Activated CD8-positive, alpha-beta T cell treated with anti-CD3 and anti-CD28 coated beads, Interleukin-2, amount 10 ng/mL, durations not matched to agents 7 days and 5 days (primary cell): ENCODE measurements at regions of chr2 and their contacts with region 1.

Region 1: GRCh38 chr2:237411683-237412423 is 2.1 kb downstream of the COL6A3 start:
- DNase-seq: no peak
- ATAC-seq: no peak
- H3K4me3 Mint-ChIP-seq: no peak overlapping the region
- H3K27ac Mint-ChIP-seq: no peak overlapping the region
- H3K4me1 Mint-ChIP-seq: no peaks in the 10 kb centered on the region
- H3K27me3 Mint-ChIP-seq: no peaks in the 10 kb centered on the region

Region 2: DNA sequence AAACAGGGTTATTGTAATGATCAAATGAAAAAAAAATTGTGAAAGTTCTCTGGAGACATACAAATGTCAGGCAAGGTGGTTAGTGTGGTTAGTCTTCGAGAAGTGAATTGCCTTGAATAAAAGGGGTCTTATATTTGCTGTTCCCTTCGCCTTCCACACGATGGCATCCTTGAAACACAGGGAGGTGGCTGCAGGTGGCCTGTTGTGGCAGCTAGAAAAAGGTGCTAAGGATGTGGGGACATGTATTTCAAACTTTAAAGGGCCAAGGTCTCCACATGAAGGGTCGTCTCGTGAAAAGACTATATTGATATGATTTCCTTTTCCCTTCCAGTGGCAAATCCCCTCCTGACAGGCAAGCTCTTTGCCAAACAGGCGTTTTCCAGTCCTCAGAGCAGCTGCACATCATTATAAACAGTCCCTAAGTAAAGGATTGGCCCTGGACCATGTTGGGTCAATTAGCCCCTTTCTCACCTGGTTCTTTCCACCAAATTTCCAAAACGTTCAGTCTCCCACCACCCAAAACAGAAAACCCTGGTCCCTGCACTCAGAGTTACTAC is 257.7 kb before region 1 on chr2:
- CTCF ChIA-PET with region 1: interaction called, 12 read pairs
- POLR2A ChIA-PET with region 1: no interaction called
- DNase-seq: peak; percentile 74
- ATAC-seq: peak; percentile 59
- H3K4me3 Mint-ChIP-seq: no peak overlapping the region
- H3K27ac Mint-ChIP-seq: no peak overlapping the region
- H3K4me1 Mint-ChIP-seq: peaks cover 35% of the 10 kb centered on the region
- H3K27me3 Mint-ChIP-seq: no peaks in the 10 kb centered on the region

Region 3: GRCh38 chr2:237383991-237384671 is 27.7 kb before region 1 on chr2:
- CTCF ChIA-PET with region 1: no interaction called
- POLR2A ChIA-PET with region 1: no interaction called
- DNase-seq: no peak
- ATAC-seq: no peak
- H3K4me3 Mint-ChIP-seq: no peak overlapping the region
- H3K27ac Mint-ChIP-seq: no peak overlapping the region
- H3K4me1 Mint-ChIP-seq: no peaks in the 10 kb centered on the region
- H3K27me3 Mint-ChIP-seq: no peaks in the 10 kb centered on the region

Region 4: GRCh38 chr2:237505188-237505939 is 93.5 kb after region 1 on chr2:
- CTCF ChIA-PET with region 1: no interaction called
- POLR2A ChIA-PET with region 1: no interaction called
- DNase-seq: no peak
- ATAC-seq: no peak
- H3K4me3 Mint-ChIP-seq: no peak overlapping the region
- H3K27ac Mint-ChIP-seq: no peak overlapping the region
- H3K4me1 Mint-ChIP-seq: no peaks in the 10 kb centered on the region
- H3K27me3 Mint-ChIP-seq: peaks cover 24% of the 10 kb centered on the region